ENCODE measurements at regions of chr7 and their contacts with region 1.

Region 1: DNA sequence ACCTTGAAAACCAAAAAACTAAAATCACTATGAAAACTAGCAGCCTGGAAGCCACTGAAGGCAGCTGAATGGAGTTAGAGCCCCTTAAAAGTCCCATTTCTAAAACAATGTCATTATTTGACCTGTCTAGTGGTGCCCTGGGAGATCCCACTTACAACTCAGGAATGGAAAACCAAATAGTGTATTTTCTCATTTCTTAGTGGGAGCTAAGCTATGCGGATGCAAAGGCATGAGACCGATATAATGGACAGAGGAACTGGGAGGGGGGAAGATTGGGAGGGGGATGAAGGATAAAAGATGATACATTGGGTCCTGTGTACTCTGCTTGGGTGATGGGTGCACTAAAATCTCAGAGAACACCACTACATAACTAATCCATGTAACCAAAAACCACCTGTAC is 9.8 kb upstream of the GIMAP2 start:
- DNase-seq: no peak

Region 2: DNA sequence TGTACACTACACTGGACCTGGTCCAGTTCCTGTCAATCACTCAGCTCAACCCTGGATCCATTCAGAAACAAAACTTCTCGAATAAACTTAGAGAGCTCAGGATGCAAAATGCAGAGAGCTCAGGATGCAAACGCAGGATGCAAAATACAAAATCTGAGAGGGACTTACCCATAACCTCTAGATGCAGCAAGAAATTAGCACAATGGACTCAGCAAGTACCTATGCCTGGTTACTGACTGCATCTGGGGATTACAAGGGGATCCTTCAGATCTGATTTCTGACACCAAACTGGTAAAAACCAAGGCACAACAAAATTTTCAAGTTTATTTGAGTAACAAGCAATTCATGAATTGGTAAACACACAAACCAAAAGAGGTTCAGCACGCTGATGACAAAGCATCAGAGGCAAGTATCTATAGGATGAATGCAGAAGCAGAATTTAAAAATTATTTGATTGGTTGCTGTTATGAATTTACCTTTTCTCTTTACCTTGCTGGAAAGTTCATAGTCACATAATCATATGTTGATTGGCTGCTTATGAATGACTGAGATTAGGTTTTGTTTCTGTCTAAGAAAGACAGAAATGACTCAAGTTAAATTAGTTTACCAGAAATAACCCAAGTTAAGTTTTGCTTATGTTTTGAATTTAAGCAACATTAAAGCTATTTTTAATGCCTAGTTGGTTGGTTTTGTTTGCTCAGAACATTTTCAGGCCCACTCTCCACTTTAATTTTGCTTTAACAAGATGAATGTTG is 54.9 kb before region 1 on chr7:
- intact Hi-C with region 1: no loop called
- DNase-seq: no peak

Region 3: DNA sequence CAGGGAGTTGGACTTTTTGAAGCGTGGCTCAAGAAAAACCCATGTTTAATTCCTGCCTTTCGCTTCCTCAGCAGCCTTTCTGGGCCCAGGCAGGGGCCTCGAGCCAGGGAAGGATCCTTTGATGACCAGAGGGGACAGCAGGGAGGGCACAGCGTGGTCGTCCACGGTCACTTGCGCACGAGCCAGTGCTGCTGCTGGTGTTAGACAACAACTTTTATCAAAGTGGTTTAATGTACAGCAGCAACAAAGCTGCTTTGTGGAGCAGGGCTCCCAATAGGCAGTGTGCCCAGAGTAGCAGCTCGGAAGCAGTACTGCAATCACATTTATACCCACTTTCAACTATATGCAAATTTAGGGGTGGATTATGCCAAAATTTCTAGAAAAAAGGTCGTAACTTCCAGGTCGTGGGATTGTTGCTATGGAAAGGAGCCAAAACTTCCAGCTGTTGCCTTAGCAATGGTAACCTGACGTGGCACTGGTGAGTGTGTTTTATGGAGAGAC is 46.8 kb after region 1 on chr7:
- intact Hi-C with region 1: loop called (anchors 10 kb)
- DNase-seq: no peak

Measured in cardiac septum (tissue), 1 donor.